Pancreas (tissue), 10 donors: ENCODE measurements at regions of chr1 and their contacts with region 1.

Region 1: GRCh38 chr1:14108356-14109275 is 408.6 kb downstream of the PRDM2 start:
- DNase-seq: peak; percentile 59 to 87 (median 80)
- ATAC-seq: peak; percentile 95 to 97 (median 96)
- H3K4me3 ChIP-seq: no peak overlapping the region
- H3K27ac ChIP-seq: peak overlapping the region; percentile 2 to 47 (median 30)
- H3K4me1 ChIP-seq: peaks cover 4 to 15% (median 14%) of the 10 kb centered on the region in 3 donors
- H3K27me3 ChIP-seq: no peaks in the 10 kb centered on the region
- CTCF ChIP-seq: no peak

Region 2: GRCh38 chr1:15046487-15047165 is 938.0 kb after region 1 on chr1:
- intact Hi-C with region 1: loop called in 1 of 3 experiments (anchors 10 kb)
- DNase-seq: peak; percentile 61 to 90 (median 79)
- ATAC-seq: peak; percentile 77 to 95 (median 88)
- H3K4me3 ChIP-seq: no peak overlapping the region
- H3K27ac ChIP-seq: no peak overlapping the region
- H3K4me1 ChIP-seq: no peaks in the 10 kb centered on the region
- H3K27me3 ChIP-seq: no peaks in the 10 kb centered on the region
- CTCF ChIP-seq: peak; percentile 83 to 91 (median 90)